ENCODE measurements at regions of chr3 and their contacts with region 1.

Region 1: DNA sequence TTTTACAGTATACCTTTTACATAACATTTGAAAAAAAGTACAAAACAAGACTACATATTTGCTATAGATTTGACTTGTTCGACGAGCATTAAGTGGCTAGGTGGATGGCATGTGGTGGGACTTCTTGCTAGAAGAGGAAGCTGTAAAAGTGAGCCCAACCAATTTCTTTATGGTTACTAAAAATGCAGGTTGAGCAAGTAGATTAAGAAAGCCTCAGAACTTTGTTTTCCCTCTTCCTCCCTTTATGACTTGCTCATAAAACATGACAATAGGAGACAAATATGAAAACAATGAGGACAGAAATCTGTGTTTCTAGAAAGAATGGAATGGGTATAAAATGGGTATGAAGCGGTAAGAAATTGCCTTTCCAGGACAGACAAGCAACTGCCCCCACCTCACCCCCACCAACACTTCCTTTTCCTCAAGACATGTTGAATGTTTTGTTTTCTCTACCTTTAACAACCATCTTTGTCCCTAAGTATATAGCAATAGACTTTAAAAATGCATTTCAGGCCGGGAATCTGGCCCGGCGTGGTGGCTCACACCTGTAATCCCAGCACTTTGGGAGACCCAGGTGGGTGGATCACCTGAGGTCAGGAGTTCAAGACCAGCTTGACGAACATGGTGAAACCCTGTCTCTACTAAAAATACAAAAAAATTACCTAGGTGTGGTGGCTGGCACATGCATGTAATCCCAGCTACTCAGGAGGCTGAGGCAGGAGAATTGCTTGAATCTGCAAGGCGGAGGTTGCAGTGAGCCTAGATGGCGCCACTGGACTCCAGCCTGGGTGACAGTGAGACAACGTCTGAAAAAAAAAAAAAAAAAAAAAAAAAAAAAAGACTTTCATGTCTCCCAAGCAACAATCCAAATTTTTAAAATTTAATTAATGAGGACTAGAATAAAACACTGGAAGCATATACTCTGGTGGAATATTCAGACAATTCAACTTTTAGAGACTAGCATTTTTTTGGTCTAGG is 49.7 kb upstream of the CCR4 start:
- DNase-seq: peak in 1 of 2 experiments; percentile 62
- H3K4me3 ChIP-seq: peak overlapping the region in 3 of 4 experiments; percentile 30 to 40 (median 31); a peak in 4 of 8 replicates
- H3K27ac ChIP-seq: no peak overlapping the region
- H3K4me1 ChIP-seq: no peaks in the 10 kb centered on the region
- H3K27me3 ChIP-seq: no peaks in the 10 kb centered on the region
- CTCF ChIP-seq: peak; percentile 26 to 41 (median 37); a peak in 3 of 4 replicates
- EP300 ChIP-seq: no peak
- POLR2A ChIP-seq: peak in 1 of 2 experiments; percentile 69; a peak in 1 of 3 replicates
- RAD21 ChIP-seq: peak in 1 of 2 experiments; percentile 6; a peak in 1 of 4 replicates

Region 2: GRCh38 chr3:32882603-32883025 is 19.1 kb before region 1 on chr3:
- CTCF ChIA-PET with region 1: interaction called, 11 read pairs
- POLR2A ChIA-PET with region 1: interaction called, 32 read pairs
- DNase-seq: no peak
- H3K4me3 ChIP-seq: no peak overlapping the region
- H3K27ac ChIP-seq: no peak overlapping the region
- H3K4me1 ChIP-seq: peaks cover 4 to 23% (median 17%) of the 10 kb centered on the region in 4 experiments; a peak in 6 of 7 replicates
- H3K27me3 ChIP-seq: no peaks in the 10 kb centered on the region
- CTCF ChIP-seq: no peak
- EP300 ChIP-seq: no peak
- POLR2A ChIP-seq: no peak
- RAD21 ChIP-seq: no peak

Region 3: GRCh38 chr3:32888739-32889138 is 13.0 kb before region 1 on chr3:
- CTCF ChIA-PET with region 1: interaction called, 11 read pairs
- POLR2A ChIA-PET with region 1: interaction called, 32 read pairs
- DNase-seq: no peak
- H3K4me3 ChIP-seq: no peak overlapping the region
- H3K27ac ChIP-seq: no peak overlapping the region
- H3K4me1 ChIP-seq: peaks cover 7 to 23% (median 12%) of the 10 kb centered on the region in 4 experiments
- H3K27me3 ChIP-seq: no peaks in the 10 kb centered on the region
- CTCF ChIP-seq: no peak
- EP300 ChIP-seq: no peak
- POLR2A ChIP-seq: peak in 1 of 2 experiments; percentile 60; a peak in 2 of 3 replicates
- RAD21 ChIP-seq: no peak

Region 4: DNA sequence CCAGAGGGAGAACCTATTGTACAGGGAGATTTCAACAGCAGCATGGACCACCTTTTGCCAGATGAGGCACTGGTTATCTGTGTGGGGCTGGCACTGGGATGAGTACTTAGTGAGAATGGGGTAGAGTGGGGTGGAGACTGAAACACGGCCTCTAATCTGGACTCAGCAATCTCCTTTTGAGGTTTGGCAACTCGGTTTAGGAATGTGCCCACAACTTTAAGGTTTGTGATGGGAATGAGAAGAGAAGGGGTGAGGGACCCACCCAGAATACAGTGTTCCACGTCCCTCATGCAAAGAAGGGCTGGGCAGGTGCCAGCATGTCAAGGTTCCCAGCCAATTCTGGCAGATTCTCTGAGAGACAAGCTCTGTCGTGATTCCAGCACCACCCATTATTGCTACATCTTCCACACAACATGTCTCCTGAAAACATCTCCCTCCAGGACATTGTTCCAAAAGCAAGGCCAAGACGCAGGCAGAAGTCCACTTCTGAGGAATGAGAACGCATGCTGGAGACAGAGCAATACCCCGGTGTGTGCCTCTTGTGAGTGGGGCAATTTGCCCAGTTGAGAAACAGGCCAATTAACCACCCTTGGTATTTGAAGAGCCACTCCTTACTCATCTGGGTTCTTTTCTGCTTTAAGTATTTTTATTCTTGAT is 12.2 kb after region 1 on chr3:
- CTCF ChIA-PET with region 1: interaction called, 10 read pairs
- POLR2A ChIA-PET with region 1: interaction called, 8 read pairs
- DNase-seq: no peak
- H3K4me3 ChIP-seq: no peak overlapping the region
- H3K27ac ChIP-seq: no peak overlapping the region
- H3K4me1 ChIP-seq: no peaks in the 10 kb centered on the region
- H3K27me3 ChIP-seq: no peaks in the 10 kb centered on the region
- CTCF ChIP-seq: no peak
- EP300 ChIP-seq: no peak
- POLR2A ChIP-seq: no peak
- RAD21 ChIP-seq: no peak

Region 5: GRCh38 chr3:32922078-32922477 is 20.4 kb after region 1 on chr3:
- CTCF ChIA-PET with region 1: interaction called, 10 read pairs
- POLR2A ChIA-PET with region 1: interaction called, 3 read pairs
- DNase-seq: no peak
- H3K4me3 ChIP-seq: no peak overlapping the region
- H3K27ac ChIP-seq: no peak overlapping the region
- H3K4me1 ChIP-seq: no peaks in the 10 kb centered on the region
- H3K27me3 ChIP-seq: no peaks in the 10 kb centered on the region
- CTCF ChIP-seq: no peak
- EP300 ChIP-seq: no peak
- POLR2A ChIP-seq: no peak
- RAD21 ChIP-seq: no peak